PC-9 (cell line): ENCODE measurements at regions of chr10 and their contacts with region 1.

Region 1: DNA sequence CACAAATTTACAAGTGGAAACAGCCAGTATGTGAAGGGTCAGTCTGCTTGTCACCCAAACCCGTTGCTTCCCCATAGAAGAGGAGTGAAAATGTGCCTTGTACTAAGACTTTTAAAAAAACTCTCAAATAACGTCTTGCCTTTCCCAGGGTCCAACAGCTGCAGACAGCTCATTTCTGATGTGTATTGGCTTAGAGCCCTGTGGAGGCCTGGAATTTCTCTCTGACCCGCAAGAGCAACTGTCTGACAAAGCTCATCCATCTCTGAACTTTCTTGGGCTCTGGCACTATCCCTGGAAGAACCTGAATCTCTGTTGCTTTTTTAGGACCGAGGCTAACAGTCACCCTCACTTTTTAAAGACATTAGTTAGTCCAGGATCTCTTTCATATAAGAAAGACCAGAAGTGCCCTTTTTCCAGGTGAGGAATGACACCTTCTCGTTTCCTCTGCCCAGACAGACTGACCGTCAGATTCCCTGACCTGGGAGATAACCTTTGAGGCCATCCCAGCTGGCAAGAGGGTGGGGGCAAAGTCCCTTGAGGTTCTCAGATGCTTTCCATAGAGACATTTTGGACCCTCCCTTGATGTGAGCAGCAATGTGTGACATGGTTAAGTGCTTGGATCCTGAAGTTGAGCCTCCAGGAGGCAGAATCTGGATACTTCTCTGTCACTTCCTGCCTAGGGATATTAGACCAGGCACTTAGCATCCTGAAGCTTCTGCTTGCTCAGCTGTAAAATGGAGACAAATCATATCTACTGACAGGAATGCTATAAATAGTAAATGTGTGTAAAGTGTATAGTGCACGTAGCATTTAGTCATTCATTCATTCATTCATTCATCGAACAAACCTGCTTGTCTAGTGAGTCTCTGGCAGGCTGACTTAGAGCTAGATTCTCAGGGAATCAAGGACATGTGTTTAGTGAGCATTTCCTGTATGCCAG is 4.5 kb upstream of the NODAL start:
- DNase-seq: no peak
- H3K4me3 ChIP-seq: no peak overlapping the region
- H3K27ac ChIP-seq: no peak overlapping the region
- H3K4me1 ChIP-seq: no peaks in the 10 kb centered on the region
- H3K27me3 ChIP-seq: peaks cover 11% of the 10 kb centered on the region; the same call in 1 of the 2 replicates
- CTCF ChIP-seq: no peak

Region 2: GRCh38 chr10:69807122-69807521 is 638.9 kb before region 1 on chr10:
- CTCF ChIA-PET with region 1: no interaction called
- POLR2A ChIA-PET with region 1: no interaction called
- intact Hi-C with region 1: no loop called
- DNase-seq: peak in 1 of 2 experiments; percentile 61
- H3K4me3 ChIP-seq: no peak overlapping the region
- H3K27ac ChIP-seq: no peak overlapping the region
- H3K4me1 ChIP-seq: peaks cover 33% of the 10 kb centered on the region
- H3K27me3 ChIP-seq: no peaks in the 10 kb centered on the region
- CTCF ChIP-seq: no peak

Region 3: GRCh38 chr10:70295321-70295720 is 150.7 kb before region 1 on chr10:
- CTCF ChIA-PET with region 1: interaction called, 11 read pairs
- POLR2A ChIA-PET with region 1: no interaction called
- intact Hi-C with region 1: no loop called
- DNase-seq: peak in 1 of 2 experiments; percentile 31
- H3K4me3 ChIP-seq: no peak overlapping the region
- H3K27ac ChIP-seq: no peak overlapping the region
- H3K4me1 ChIP-seq: peaks cover 13% of the 10 kb centered on the region
- H3K27me3 ChIP-seq: no peaks in the 10 kb centered on the region
- CTCF ChIP-seq: no peak